Activated naive CD8-positive, alpha-beta T cell treated with anti-CD3 and anti-CD28 coated beads, Interleukin-2, amount 10 ng/mL, durations not matched to agents 7 days and 5 days (primary cell): ENCODE measurements at regions of chr22 and their contacts with region 1.

Region 1: DNA sequence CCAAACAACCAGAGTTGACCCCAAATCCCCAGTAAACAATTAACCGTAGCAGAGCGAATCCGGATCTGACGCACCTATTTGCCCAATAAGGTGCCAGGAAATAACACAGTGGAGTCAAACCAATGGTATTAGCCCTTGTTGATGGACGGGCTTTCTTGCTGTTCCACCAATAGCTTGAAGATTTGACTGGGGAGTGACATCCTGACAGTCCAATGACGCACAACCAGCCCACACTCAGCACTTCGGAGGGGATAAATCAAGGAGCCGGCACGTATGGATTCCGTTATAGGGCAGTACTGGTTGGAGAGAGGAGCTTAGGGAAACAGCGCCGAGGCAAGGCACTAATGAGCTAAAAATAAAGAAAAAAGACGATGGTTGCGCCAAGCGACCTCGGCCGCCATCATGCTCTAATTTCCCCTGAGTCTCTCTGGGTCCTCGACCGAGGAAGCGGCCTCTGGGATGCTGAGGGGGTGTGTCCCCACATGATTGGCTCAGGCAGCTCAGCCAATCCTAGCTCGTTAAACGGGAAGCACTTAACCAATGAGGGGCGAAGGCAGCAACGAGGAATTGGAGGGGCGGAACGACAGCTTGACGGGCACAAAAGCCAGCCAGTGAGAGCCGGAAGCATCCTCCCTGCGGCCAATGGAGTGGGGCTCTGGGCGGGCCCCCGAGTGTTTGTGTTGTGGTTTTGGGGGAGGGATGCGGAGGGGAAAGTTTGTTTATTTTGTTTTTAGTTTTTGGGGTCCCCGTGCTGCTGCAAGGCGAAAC is 49.5 kb downstream of the FAM83F start:
- DNase-seq: peak; percentile 96
- ATAC-seq: peak; percentile 89
- H3K4me3 Mint-ChIP-seq: peak overlapping the region; percentile 95
- H3K27ac Mint-ChIP-seq: peak overlapping the region; percentile 100
- H3K4me1 Mint-ChIP-seq: peaks cover 29% of the 10 kb centered on the region
- H3K27me3 Mint-ChIP-seq: peaks cover 7% of the 10 kb centered on the region

Region 2: DNA sequence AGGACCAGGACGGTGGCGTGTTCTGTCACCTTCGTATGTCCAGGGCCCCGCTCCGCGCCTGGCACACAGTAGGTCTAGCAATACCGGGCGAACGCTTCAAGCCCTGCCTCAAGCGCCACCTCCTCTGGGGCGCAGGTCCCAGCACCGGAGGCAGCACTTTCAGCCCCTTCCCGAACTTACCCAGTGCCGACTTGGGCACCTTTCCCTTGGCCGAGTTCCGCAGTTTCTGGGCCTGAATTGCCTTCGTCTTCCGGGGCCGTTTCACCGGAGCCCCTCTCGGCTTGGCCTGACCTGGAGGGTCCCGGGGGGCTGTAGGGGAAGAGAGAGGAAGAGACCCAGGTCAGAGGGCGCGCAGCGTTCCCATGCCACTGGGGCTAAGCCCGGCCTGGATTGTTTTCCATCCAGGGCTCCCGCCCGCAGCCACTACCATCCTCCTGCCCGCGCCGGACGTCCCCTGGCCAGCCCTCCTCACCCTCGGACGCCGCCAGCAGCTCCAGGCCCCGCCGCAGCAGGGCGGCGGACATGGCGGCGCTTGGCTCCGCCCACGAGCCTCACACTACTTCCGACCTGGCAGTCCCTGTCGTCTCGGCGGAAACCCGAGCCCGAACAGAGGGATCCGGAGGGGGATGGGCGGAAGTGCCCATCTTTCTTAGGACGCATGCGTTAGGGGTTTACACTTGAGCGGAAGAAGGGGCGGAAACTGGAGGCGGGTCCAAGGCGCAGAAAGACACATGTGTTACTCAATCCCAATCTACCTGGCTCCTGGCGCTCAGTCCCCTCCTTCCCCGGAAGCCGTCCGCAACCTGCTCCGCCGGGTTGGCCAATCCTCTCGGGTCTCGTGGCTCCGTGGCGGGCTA is 511.8 kb before region 1 on chr22 and contains the start of gene RPS19BP1:
- POLR2A ChIA-PET with region 1: interaction called, 10 read pairs
- DNase-seq: peak; percentile 97
- ATAC-seq: peak; percentile 85
- H3K4me3 Mint-ChIP-seq: peak within 1 kb of the TSS; percentile 93
- H3K27ac Mint-ChIP-seq: peak within 1 kb of the TSS; percentile 97
- H3K4me1 Mint-ChIP-seq: peaks cover 43% of the 10 kb centered on the region
- H3K27me3 Mint-ChIP-seq: no peaks in the 10 kb centered on the region
- total RNA-seq, gene RPS19BP1: 66.5 to 71.4 TPM

Region 3: GRCh38 chr22:40055143-40055883 is 11.0 kb after region 1 on chr22:
- POLR2A ChIA-PET with region 1: interaction called, 58 read pairs
- DNase-seq: no peak
- ATAC-seq: peak; percentile 91
- H3K4me3 Mint-ChIP-seq: peak overlapping the region; percentile 84
- H3K27ac Mint-ChIP-seq: peak overlapping the region; percentile 96
- H3K4me1 Mint-ChIP-seq: peaks cover 68% of the 10 kb centered on the region
- H3K27me3 Mint-ChIP-seq: no peaks in the 10 kb centered on the region

Region 4: GRCh38 chr22:40177738-40178416 is 133.6 kb after region 1 on chr22 and contains the start of gene TNRC6B:
- POLR2A ChIA-PET with region 1: interaction called, 104 read pairs
- DNase-seq: no peak
- ATAC-seq: peak; percentile 85
- H3K4me3 Mint-ChIP-seq: peak within 1 kb of the TSS; percentile 86
- H3K27ac Mint-ChIP-seq: peak within 1 kb of the TSS; percentile 87
- H3K4me1 Mint-ChIP-seq: peaks cover 43% of the 10 kb centered on the region
- H3K27me3 Mint-ChIP-seq: no peaks in the 10 kb centered on the region
- total RNA-seq, gene TNRC6B: 89.6 to 91.4 TPM

Region 5: GRCh38 chr22:40203572-40203971 is 159.3 kb after region 1 on chr22:
- POLR2A ChIA-PET with region 1: interaction called, 10 read pairs
- DNase-seq: no peak
- ATAC-seq: peak; percentile 87
- H3K4me3 Mint-ChIP-seq: peak overlapping the region; percentile 62
- H3K27ac Mint-ChIP-seq: peak overlapping the region; percentile 46
- H3K4me1 Mint-ChIP-seq: peaks cover 37% of the 10 kb centered on the region
- H3K27me3 Mint-ChIP-seq: no peaks in the 10 kb centered on the region